ENCODE measurements at regions of chr17 and their contacts with region 1.

Region 1: GRCh38 chr17:48892940-48893645 is 506 bp downstream of the ATP5MC1 start:
- DNase-seq: peak; percentile 28
- ATAC-seq: no peak
- H3K4me3 Mint-ChIP-seq: peak overlapping the region; percentile 89
- H3K27ac Mint-ChIP-seq: peak overlapping the region; percentile 88
- H3K4me1 Mint-ChIP-seq: peaks cover 38% of the 10 kb centered on the region
- H3K27me3 Mint-ChIP-seq: no peaks in the 10 kb centered on the region

Region 2: DNA sequence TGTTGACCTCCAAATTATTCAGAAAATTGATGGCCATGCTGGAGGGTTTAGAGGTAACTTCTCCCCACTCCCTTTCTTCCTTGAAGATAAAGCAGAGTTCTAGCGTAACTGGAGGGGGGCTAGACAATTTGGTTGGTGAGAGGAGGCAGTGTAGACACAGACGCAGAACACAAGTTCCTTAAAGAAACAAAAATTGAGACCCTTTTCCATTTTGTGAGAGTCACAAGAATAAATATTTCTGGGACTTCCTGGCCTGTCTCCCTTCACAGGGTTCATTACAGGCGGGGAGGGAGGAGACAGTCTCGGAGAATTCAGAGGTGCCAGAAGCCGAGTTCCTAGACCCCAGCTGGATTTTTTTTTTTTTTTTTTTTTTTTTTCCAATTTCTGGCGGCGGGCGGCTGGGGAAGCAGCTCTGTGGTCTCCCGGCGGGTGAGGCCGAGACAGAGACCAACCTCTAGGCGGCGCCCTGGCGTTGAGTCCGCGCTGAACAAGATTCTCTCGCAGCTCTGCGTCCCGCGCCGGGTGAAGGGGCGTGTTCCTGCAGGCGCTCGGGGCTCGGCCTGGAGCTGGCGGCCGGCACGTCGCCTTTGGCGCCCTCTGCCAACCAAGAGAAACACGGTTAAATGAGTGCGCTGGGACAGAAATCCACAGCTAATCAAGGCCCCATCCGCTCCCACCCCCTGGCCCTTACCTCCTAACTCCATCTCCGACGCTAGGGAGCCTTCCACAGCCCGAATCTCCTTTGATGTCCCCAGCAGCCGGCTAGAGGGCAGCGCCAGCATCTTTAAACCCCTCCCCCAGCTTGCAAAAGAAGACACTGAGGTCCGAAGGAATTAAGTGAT is 256.7 kb before region 1 on chr17:
- CTCF ChIA-PET with region 1: no interaction called
- POLR2A ChIA-PET with region 1: no interaction called
- DNase-seq: peak; percentile 80
- ATAC-seq: peak; percentile 90
- H3K4me3 Mint-ChIP-seq: peak overlapping the region; percentile 18
- H3K27ac Mint-ChIP-seq: no peak overlapping the region
- H3K4me1 Mint-ChIP-seq: peaks cover 14% of the 10 kb centered on the region
- H3K27me3 Mint-ChIP-seq: peaks cover 84% of the 10 kb centered on the region

Region 3: DNA sequence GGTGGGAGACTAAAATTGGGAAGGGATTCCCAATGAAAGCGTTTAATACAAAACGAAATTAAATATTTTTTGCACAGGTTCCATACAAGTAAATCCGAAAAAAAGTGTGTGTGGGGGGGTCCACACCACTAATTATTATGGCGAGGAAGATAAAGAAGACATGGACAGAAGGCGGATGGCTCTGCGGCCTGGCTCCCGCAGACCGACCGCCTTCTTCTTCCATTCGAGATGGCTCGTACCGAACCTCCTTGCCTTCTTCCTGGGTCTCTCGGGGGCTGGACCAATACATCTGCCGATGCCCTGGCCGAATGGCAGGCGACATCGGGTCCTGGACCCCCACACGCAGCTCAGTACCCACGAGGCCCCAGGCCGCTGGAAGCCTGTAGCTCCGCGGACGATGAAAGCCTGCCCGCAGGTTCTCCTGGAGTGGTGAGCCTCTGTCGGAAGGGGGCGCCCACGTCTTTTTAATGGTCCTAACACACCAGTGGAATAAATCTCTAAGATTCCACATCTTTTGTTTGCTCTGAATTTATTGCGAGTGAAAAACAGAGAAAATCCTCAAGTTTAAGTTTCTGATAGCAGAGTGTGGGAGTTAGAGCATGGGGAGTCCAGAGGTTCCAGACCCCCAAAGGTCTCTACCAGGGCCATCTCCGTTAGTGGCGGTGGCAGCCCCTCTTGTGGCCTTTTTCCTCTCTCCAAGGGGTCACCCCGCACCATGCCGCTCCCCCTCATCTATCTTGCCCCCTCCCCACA is 168.7 kb before region 1 on chr17:
- CTCF ChIA-PET with region 1: interaction called, 13 read pairs
- POLR2A ChIA-PET with region 1: no interaction called
- DNase-seq: peak; percentile 88
- ATAC-seq: peak; percentile 80
- H3K4me3 Mint-ChIP-seq: peak overlapping the region; percentile 45
- H3K27ac Mint-ChIP-seq: no peak overlapping the region
- H3K4me1 Mint-ChIP-seq: peaks cover 42% of the 10 kb centered on the region
- H3K27me3 Mint-ChIP-seq: peaks cover 94% of the 10 kb centered on the region

Region 4: DNA sequence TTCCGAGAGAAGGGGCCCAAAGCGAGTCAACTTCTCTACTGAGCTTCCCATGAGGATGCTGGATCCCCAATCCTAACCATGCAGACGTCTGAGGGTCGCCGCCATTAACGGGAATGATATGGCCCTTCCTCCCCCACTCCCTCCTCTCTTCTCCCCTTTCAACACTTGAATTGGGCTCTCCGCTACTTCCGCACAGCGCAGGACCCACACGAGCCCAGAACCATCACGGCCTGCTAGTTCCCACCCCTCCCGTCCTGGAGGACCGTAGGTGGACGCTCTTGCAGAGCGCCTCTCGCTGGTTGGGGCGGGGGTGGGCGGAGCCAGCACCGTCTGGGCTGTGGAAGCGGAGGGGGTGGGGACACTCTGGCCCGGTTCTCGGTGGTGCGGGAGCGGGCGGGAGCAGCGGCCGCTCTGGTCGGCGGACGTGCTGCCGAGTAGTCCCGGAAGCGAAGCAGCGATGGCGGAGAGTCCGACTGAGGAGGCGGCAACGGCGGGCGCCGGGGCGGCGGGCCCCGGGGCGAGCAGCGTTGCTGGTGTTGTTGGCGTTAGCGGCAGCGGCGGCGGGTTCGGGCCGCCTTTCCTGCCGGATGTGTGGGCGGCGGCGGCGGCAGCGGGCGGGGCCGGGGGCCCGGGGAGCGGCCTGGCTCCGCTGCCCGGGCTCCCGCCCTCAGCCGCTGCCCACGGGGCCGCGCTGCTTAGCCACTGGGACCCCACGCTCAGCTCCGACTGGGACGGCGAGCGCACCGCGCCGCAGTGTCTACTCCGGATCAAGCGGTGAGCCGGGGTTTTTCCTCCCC is 15.2 kb after region 1 on chr17 and contains the start of gene UBE2Z:
- CTCF ChIA-PET with region 1: interaction called, 15 read pairs
- POLR2A ChIA-PET with region 1: interaction called, 46 read pairs
- DNase-seq: peak; percentile 91
- ATAC-seq: peak; percentile 90
- H3K4me3 Mint-ChIP-seq: peak within 1 kb of the TSS; percentile 99
- H3K27ac Mint-ChIP-seq: peak within 1 kb of the TSS; percentile 97
- H3K4me1 Mint-ChIP-seq: peaks cover 49% of the 10 kb centered on the region
- H3K27me3 Mint-ChIP-seq: no peaks in the 10 kb centered on the region
- total RNA-seq, gene UBE2Z: 61.8 to 62.4 TPM

Region 5: DNA sequence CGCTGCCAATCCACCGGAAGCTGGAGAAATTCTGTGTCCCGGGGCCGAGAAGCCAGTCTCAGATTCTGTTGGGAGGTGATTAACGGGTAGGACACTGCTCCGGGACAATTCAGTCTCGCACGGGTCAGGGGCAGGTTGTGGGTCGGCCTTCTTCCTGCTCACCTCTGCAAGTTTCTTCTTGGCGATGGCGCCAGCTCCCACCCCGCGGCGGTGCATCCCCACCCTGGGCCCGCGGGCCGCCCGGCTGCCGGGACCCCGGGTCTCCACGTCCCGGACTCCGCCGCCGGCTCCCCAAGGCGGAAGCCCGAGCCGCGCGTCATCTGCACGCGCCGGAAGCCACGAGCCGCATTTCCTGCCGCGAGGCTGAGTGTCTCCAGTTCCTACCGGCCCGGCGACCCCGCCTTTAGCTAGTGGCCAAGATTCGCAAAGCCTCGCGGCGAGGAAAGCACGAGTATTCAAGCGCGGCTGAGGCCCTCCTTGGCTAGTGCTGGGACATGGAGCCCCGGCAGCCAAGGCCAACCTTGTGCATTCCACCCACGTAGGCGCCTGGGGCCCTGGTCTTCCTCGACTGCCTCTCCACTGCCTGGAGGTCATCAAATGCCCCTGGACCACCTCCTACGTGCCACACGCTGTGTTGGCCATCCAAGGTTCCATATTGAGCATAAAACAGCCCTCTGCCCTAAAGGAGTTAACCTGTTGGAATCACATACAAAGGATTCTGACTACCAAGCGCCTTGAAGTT is 51.6 kb after region 1 on chr17 and contains the start of gene SNF8:
- CTCF ChIA-PET with region 1: no interaction called
- POLR2A ChIA-PET with region 1: interaction called, 10 read pairs
- DNase-seq: peak; percentile 96
- ATAC-seq: peak; percentile 96
- H3K4me3 Mint-ChIP-seq: peak within 1 kb of the TSS; percentile 96
- H3K27ac Mint-ChIP-seq: peak within 1 kb of the TSS; percentile 98
- H3K4me1 Mint-ChIP-seq: peaks cover 25% of the 10 kb centered on the region
- H3K27me3 Mint-ChIP-seq: peaks cover 3% of the 10 kb centered on the region
- total RNA-seq, gene SNF8: 124 to 125 TPM

Measured in activated CD8-positive, alpha-beta T cell treated with anti-CD3 and anti-CD28 coated beads, Interleukin-2, amount 10 ng/mL, durations not matched to agents 7 days and 5 days (primary cell).